Dendritic cell treated with granulocyte-macrophage colony-stimulating factor and Interleukin-4, amounts not matched to agents 40 ng/mL and 50 ng/mL, for 4 days (primary cell): ENCODE measurements at regions of chr1 and their contacts with region 1.

Region 1: GRCh38 chr1:11227106-11228077 is 35.0 kb downstream of the MTOR start:
- H3K4me3 Mint-ChIP-seq: no peak overlapping the region
- H3K27ac Mint-ChIP-seq: no peak overlapping the region
- H3K4me1 Mint-ChIP-seq: no peaks in the 10 kb centered on the region
- H3K27me3 Mint-ChIP-seq: no peaks in the 10 kb centered on the region

Region 2: GRCh38 chr1:11072216-11072917 is 155.0 kb before region 1 on chr1:
- intact Hi-C with region 1: no loop called
- H3K4me3 Mint-ChIP-seq: no peak overlapping the region
- H3K27ac Mint-ChIP-seq: no peak overlapping the region
- H3K4me1 Mint-ChIP-seq: no peaks in the 10 kb centered on the region
- H3K27me3 Mint-ChIP-seq: no peaks in the 10 kb centered on the region

Region 3: DNA sequence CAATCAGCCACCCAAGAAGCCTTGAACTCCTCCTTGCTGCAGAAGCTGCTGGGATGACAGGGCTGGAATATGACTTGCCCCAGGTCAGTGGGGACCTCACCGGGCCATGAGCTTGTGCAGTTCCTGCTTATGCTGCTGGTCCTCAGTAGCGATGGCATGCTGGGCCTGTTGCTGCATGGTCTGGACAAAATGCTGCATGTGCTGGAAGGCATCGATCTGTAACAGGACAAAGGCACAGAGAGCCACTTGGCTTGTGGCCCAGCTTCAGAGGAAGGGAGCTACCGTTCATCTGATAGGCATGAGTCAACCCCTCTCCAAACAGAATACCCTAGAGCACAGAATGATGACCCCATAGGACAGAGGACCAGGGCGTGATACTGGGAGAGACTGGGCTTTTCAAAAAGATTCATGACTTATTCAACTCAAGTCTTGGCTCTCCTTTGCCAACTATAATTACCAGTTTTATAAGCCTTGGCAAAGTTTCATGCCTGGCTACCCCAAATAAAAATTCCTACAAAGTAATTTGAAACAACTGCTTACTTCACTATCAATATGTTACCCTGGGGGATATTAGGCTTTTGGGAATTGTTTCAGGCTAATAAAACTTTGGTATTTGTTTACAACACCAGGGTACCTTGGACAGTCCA is 93.0 kb before region 1 on chr1:
- intact Hi-C with region 1: loop called (anchors 10 kb)
- H3K4me3 Mint-ChIP-seq: no peak overlapping the region
- H3K27ac Mint-ChIP-seq: no peak overlapping the region
- H3K4me1 Mint-ChIP-seq: no peaks in the 10 kb centered on the region
- H3K27me3 Mint-ChIP-seq: no peaks in the 10 kb centered on the region

Region 4: GRCh38 chr1:11178021-11179015 is 49.1 kb before region 1 on chr1:
- intact Hi-C with region 1: no loop called
- H3K4me3 Mint-ChIP-seq: no peak overlapping the region
- H3K27ac Mint-ChIP-seq: no peak overlapping the region
- H3K4me1 Mint-ChIP-seq: no peaks in the 10 kb centered on the region
- H3K27me3 Mint-ChIP-seq: no peaks in the 10 kb centered on the region